B cell (primary cell): ENCODE measurements at regions of chr21 and their contacts with region 1.

Region 1: GRCh38 chr21:29360799-29361765 is 62.4 kb downstream of the BACH1 start:
- DNase-seq: no peak
- ATAC-seq: no peak
- H3K4me3 ChIP-seq: no peak overlapping the region
- H3K4me3 Mint-ChIP-seq: no peak overlapping the region
- H3K27ac ChIP-seq: no peak overlapping the region
- H3K27ac Mint-ChIP-seq: no peak overlapping the region
- H3K4me1 ChIP-seq: peaks cover 0 to 5% of the 10 kb centered on the region in 2 donors
- H3K4me1 Mint-ChIP-seq: peaks cover 13% of the 10 kb centered on the region
- H3K27me3 ChIP-seq: no peaks in the 10 kb centered on the region
- H3K27me3 Mint-ChIP-seq: no peaks in the 10 kb centered on the region
- CTCF ChIP-seq: no peak

Region 2: GRCh38 chr21:29332461-29333362 is 28.4 kb before region 1 on chr21:
- CTCF ChIA-PET with region 1: no interaction called
- POLR2A ChIA-PET with region 1: no interaction called
- intact Hi-C with region 1: loop called (anchors 5 kb)
- DNase-seq: no peak
- ATAC-seq: no peak
- H3K4me3 ChIP-seq: no peak overlapping the region
- H3K4me3 Mint-ChIP-seq: no peak overlapping the region
- H3K27ac ChIP-seq: no peak overlapping the region
- H3K27ac Mint-ChIP-seq: no peak overlapping the region
- H3K4me1 ChIP-seq: no peaks in the 10 kb centered on the region
- H3K4me1 Mint-ChIP-seq: peaks cover 7% of the 10 kb centered on the region
- H3K27me3 ChIP-seq: no peaks in the 10 kb centered on the region
- H3K27me3 Mint-ChIP-seq: no peaks in the 10 kb centered on the region
- CTCF ChIP-seq: no peak

Region 3: GRCh38 chr21:29343519-29343918 is 17.6 kb before region 1 on chr21:
- CTCF ChIA-PET with region 1: interaction called, 6 read pairs
- POLR2A ChIA-PET with region 1: no interaction called
- intact Hi-C with region 1: loop called (anchors 2 kb)
- DNase-seq: no peak
- ATAC-seq: no peak
- H3K4me3 ChIP-seq: no peak overlapping the region
- H3K4me3 Mint-ChIP-seq: no peak overlapping the region
- H3K27ac ChIP-seq: no peak overlapping the region
- H3K27ac Mint-ChIP-seq: no peak overlapping the region
- H3K4me1 ChIP-seq: peaks cover 16 to 17% of the 10 kb centered on the region in 2 donors
- H3K4me1 Mint-ChIP-seq: peaks cover 33% of the 10 kb centered on the region
- H3K27me3 ChIP-seq: no peaks in the 10 kb centered on the region
- H3K27me3 Mint-ChIP-seq: no peaks in the 10 kb centered on the region
- CTCF ChIP-seq: no peak

Region 4: GRCh38 chr21:29423099-29423498 is 62.0 kb after region 1 on chr21:
- CTCF ChIA-PET with region 1: no interaction called
- POLR2A ChIA-PET with region 1: no interaction called
- intact Hi-C with region 1: no loop called
- DNase-seq: no peak
- ATAC-seq: no peak
- H3K4me3 ChIP-seq: no peak overlapping the region
- H3K4me3 Mint-ChIP-seq: no peak overlapping the region
- H3K27ac ChIP-seq: no peak overlapping the region
- H3K27ac Mint-ChIP-seq: no peak overlapping the region
- H3K4me1 ChIP-seq: peaks cover 10 to 19% of the 10 kb centered on the region in 2 donors
- H3K4me1 Mint-ChIP-seq: peaks cover 29% of the 10 kb centered on the region
- H3K27me3 ChIP-seq: no peaks in the 10 kb centered on the region
- H3K27me3 Mint-ChIP-seq: no peaks in the 10 kb centered on the region
- CTCF ChIP-seq: no peak